Sciatic nerve (tissue), 2 donors: ENCODE measurements at regions of chr22 and their contacts with region 1.

Region 1: DNA sequence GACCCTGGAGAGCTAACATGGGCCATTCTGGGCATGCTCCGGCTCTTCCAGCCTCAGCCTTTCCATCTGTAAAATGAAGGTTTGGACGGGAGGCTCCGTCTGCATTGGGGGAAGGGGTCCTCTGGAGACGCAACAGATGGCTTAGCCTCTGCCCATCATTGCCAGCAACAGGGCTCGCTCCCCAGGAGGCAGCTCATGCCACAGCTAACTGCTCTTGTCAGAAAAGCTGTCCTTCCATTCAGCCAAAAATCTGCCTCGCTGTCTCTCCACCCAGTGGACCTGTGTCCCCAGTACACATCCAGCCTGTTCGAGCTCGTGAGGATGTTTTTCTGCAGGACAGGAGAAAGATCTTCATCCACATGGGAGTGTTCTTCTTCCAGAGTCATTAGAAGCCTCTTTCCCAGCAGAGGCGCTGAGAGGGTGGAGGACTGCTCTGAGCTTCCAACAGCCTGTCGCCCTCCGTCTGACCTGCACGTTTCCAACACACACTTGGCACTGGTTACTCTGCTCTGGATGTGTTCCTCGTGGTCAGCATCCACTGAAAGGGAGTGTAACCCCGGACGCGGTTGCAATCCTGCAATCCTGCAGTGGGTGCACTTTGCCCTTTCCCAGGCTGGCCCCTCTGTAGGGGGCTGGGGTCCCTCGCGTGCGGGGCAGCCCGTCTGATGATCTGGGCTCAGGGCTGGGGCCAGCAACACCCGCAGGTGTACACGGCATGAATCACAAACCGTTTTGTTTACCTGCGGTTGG is 1340.9 kb downstream of the TBC1D22A start:
- DNase-seq: no peak
- ATAC-seq: peak; percentile 30

Region 2: DNA sequence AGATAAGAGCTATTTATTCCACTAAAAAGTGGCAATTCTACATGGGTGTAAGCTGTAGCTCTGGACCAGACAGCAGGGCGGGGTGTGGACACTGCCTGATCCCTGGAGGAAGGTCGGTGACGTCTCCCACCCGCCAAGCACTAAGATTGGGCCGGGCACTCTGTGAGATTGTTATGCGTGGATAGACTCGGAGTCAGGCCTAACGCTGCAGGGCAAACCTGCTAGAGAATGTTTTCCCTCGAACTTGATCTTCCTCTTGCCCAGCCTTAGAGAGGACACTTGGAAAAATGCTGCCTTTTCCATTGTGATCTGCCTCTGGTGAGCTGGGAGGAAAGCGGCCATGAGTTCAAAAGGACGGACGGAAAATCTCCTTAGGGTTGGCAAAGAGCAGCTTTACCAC is 67.4 kb before region 1 on chr22:
- intact Hi-C with region 1: no loop called
- DNase-seq: no peak
- ATAC-seq: no peak

Region 3: GRCh38 chr22:48079505-48080290 is 23.6 kb before region 1 on chr22:
- intact Hi-C with region 1: loop called (anchors 2 kb)
- DNase-seq: no peak
- ATAC-seq: no peak

Region 4: GRCh38 chr22:48277868-48278581 is 174.7 kb after region 1 on chr22:
- intact Hi-C with region 1: no loop called
- DNase-seq: no peak
- ATAC-seq: peak; percentile 20